Gastrocnemius medialis (tissue), 4 donors: ENCODE measurements at regions of chr10 and their contacts with region 1.

Region 1: GRCh38 chr10:24642622-24643417 is 80.9 kb downstream of the ARHGAP21 start:
- DNase-seq: no peak
- ATAC-seq: peak; percentile 88 to 95
- H3K4me3 ChIP-seq: no peak overlapping the region
- H3K27ac ChIP-seq: no peak overlapping the region
- H3K4me1 ChIP-seq: peaks cover 8 to 21% of the 10 kb centered on the region in 2 donors
- H3K27me3 ChIP-seq: no peaks in the 10 kb centered on the region
- CTCF ChIP-seq: peak; percentile 64 to 84 (median 76)
- POLR2A ChIP-seq: no peak

Region 2: GRCh38 chr10:24223953-24224352 is 418.9 kb before region 1 on chr10:
- in situ Hi-C with region 1: no loop called
- intact Hi-C with region 1: no loop called
- DNase-seq: no peak
- ATAC-seq: no peak
- H3K4me3 ChIP-seq: no peak overlapping the region
- H3K27ac ChIP-seq: peak overlapping the region in 1 of 4 donors; percentile 41
- H3K4me1 ChIP-seq: peaks cover 8 to 28% of the 10 kb centered on the region in 2 donors
- H3K27me3 ChIP-seq: no peaks in the 10 kb centered on the region
- CTCF ChIP-seq: no peak
- POLR2A ChIP-seq: no peak

Region 3: GRCh38 chr10:24680647-24681524 is 38.1 kb after region 1 on chr10:
- in situ Hi-C with region 1: no loop called
- intact Hi-C with region 1: no loop called
- DNase-seq: no peak
- ATAC-seq: peak; percentile 34 to 58
- H3K4me3 ChIP-seq: no peak overlapping the region
- H3K27ac ChIP-seq: peak overlapping the region; percentile 18 to 66 (median 33)
- H3K4me1 ChIP-seq: peaks cover 17 to 38% of the 10 kb centered on the region in 2 donors
- H3K27me3 ChIP-seq: no peaks in the 10 kb centered on the region
- CTCF ChIP-seq: no peak
- POLR2A ChIP-seq: no peak

Region 4: GRCh38 chr10:24724381-24725228 is 81.8 kb after region 1 on chr10:
- in situ Hi-C with region 1: no loop called
- intact Hi-C with region 1: loop called (anchors 1 kb)
- DNase-seq: peak; percentile 98
- ATAC-seq: peak; percentile 85 to 87
- H3K4me3 ChIP-seq: peak overlapping the region; percentile 81 to 98 (median 84)
- H3K27ac ChIP-seq: peak overlapping the region; percentile 93 to 98 (median 94)
- H3K4me1 ChIP-seq: peaks cover 25 to 30% of the 10 kb centered on the region in 2 donors
- H3K27me3 ChIP-seq: no peaks in the 10 kb centered on the region
- CTCF ChIP-seq: no peak
- POLR2A ChIP-seq: peak; percentile 90 to 97

Region 5: GRCh38 chr10:24822590-24822989 is 179.8 kb after region 1 on chr10:
- in situ Hi-C with region 1: no loop called
- intact Hi-C with region 1: no loop called
- DNase-seq: no peak
- ATAC-seq: no peak
- H3K4me3 ChIP-seq: no peak overlapping the region
- H3K27ac ChIP-seq: no peak overlapping the region
- H3K4me1 ChIP-seq: peaks cover 0 to 5% of the 10 kb centered on the region in 2 donors
- H3K27me3 ChIP-seq: no peaks in the 10 kb centered on the region
- CTCF ChIP-seq: no peak
- POLR2A ChIP-seq: no peak

Region 6: GRCh38 chr10:24952707-24953645 is 310.2 kb after region 1 on chr10:
- in situ Hi-C with region 1: loop called in 1 of 4 experiments (anchors 10 kb)
- intact Hi-C with region 1: loop called (anchors 2 kb)
- DNase-seq: peak in 1 of 2 donors; percentile 23
- ATAC-seq: peak; percentile 39 to 57
- H3K4me3 ChIP-seq: peak overlapping the region; percentile 54 to 72 (median 61)
- H3K27ac ChIP-seq: peak overlapping the region; percentile 58 to 67 (median 65)
- H3K4me1 ChIP-seq: peaks cover 0 to 5% of the 10 kb centered on the region in 2 donors
- H3K27me3 ChIP-seq: peaks cover 0 to 3% (median 0%) of the 10 kb centered on the region in 3 donors
- CTCF ChIP-seq: peak in 4 of 5 experiments; percentile 18 to 37 (median 33)
- POLR2A ChIP-seq: no peak

Region 7: DNA sequence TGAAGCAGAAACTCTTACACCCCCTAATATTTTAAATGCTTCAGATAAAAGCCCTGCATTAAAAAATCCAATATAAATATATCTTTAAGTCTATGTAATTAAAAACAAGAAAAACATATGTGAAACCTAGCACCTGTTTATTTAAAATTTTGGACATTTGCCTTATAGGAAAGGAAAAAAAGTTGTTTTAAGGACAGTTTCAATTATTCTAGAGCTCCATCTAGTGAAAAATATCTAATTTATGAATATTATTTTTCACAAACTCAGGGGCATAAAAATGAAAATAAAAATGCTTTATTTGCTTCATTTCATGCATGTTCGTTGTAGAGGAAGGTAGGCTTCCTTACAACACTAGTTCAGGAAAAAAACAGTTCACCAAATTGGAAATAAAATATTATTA is 347.0 kb after region 1 on chr10:
- in situ Hi-C with region 1: loop called in 3 of 4 experiments (anchors 10 to 25 kb)
- intact Hi-C with region 1: loop called (anchors 5 kb)
- DNase-seq: no peak
- ATAC-seq: no peak
- H3K4me3 ChIP-seq: no peak overlapping the region
- H3K27ac ChIP-seq: no peak overlapping the region
- H3K4me1 ChIP-seq: no peaks in the 10 kb centered on the region
- H3K27me3 ChIP-seq: no peaks in the 10 kb centered on the region
- CTCF ChIP-seq: peak in 2 of 5 experiments; percentile 15 to 17
- POLR2A ChIP-seq: no peak

Region 8: GRCh38 chr10:25080880-25081581 is 438.2 kb after region 1 on chr10:
- in situ Hi-C with region 1: loop called (anchors 10 to 25 kb)
- intact Hi-C with region 1: loop called (anchors 1 kb)
- DNase-seq: peak; percentile 71
- ATAC-seq: peak; percentile 98 to 100
- H3K4me3 ChIP-seq: no peak overlapping the region
- H3K27ac ChIP-seq: peak overlapping the region in 1 of 4 donors; percentile 29
- H3K4me1 ChIP-seq: no peaks in the 10 kb centered on the region
- H3K27me3 ChIP-seq: no peaks in the 10 kb centered on the region
- CTCF ChIP-seq: peak; percentile 73 to 90 (median 78)
- POLR2A ChIP-seq: no peak